ENCODE measurements at regions of chr6 and their contacts with region 1.

Region 1: DNA sequence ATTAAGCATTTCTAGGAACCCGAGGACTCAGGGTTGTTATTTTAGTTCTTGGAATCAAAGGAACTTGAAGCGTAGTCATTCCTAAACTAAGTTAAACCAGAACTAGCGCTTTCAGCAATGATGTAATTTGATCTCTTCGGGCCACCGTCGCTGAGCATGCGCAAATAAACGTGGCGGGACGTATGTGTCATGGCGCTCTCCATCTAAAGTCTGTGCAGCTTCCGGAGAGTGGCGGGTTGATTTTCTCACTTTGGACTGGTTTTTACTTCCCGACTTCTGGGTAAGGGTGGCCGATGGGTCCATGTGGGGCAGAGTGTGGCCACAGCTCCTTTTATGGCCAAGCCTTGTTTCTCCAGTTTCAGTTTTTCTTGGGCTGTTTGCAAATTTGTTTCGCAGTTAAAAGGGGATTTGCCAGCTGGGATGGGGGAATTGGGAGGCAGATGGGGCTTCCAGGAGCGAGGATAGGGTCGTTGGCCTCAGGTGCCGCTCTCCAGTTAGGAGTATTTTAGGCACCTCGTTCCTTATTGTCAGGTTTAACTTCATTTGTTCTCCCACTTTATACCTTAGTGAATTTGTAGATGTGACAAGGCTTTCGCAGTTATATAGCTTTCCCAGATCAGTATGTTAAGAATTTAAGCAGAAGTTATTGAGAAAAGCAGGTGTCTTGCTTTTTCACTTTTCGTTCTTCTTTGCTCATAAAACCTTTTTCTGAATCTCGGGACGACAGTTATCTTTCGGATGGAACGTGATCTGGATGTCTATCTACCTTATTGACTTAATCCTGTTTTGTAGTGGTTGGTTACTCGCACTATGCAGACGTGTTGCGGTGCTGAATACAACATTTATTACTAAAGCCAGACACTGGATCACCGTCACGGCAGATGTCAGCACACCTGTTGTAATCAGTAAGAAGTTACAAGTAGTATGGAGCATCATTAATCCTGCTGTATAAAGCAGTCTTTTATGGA is at the start of gene CDKAL1:
- DNase-seq: peak; percentile 93
- ATAC-seq: peak; percentile 95
- H3K4me3 ChIP-seq: peak within 1 kb of the TSS; percentile 73
- H3K27ac ChIP-seq: peak within 1 kb of the TSS; percentile 92
- H3K4me1 ChIP-seq: 0 out of 2 replicates have a peak, but pooled peaks cover 1% of the 10 kb centered on the region
- H3K27me3 ChIP-seq: no peaks in the 10 kb centered on the region
- CTCF ChIP-seq: no peak
- POLR2A ChIP-seq: peak; percentile 80
- RAD21 ChIP-seq: no peak
- total RNA-seq, gene CDKAL1: 13.1 and 17.5 TPM in 2 replicates

Region 2: DNA sequence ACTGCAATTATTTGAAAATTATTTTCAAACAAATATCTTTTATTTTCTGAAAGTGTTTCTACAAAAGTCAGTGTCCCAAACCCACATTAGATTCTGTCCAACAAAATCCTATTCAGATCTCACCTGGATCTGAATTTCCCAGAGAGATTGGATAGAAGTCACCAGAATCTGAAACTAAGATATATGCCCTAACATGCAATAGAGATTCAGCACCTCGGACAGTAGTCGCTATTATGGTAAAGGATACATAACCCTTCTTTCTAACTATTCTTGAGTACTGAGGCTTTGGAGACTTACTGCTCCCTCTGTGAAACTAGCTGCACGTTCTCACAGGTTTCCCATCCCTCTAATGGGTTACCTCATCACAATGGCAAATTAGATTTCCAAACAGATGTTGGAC is 546.0 kb before region 1 on chr6:
- CTCF ChIA-PET with region 1: no interaction called
- POLR2A ChIA-PET with region 1: no interaction called
- dilution Hi-C with region 1: no loop called
- in situ Hi-C with region 1: no loop called
- intact Hi-C with region 1: no loop called
- DNase-seq: peak; percentile 9
- ATAC-seq: no peak
- H3K4me3 ChIP-seq: no peak overlapping the region
- H3K27ac ChIP-seq: no peak overlapping the region
- H3K4me1 ChIP-seq: no peaks in the 10 kb centered on the region
- H3K27me3 ChIP-seq: no peaks in the 10 kb centered on the region
- CTCF ChIP-seq: no peak
- POLR2A ChIP-seq: no peak
- RAD21 ChIP-seq: no peak

Region 3: GRCh38 chr6:20092071-20092566 is 442.5 kb before region 1 on chr6:
- CTCF ChIA-PET with region 1: no interaction called
- POLR2A ChIA-PET with region 1: no interaction called
- dilution Hi-C with region 1: no loop called
- in situ Hi-C with region 1: loop called (anchors 5 kb)
- intact Hi-C with region 1: loop called (anchors 1 kb)
- DNase-seq: peak; percentile 59
- ATAC-seq: peak; percentile 70
- H3K4me3 ChIP-seq: no peak overlapping the region
- H3K27ac ChIP-seq: no peak overlapping the region
- H3K4me1 ChIP-seq: no peaks in the 10 kb centered on the region
- H3K27me3 ChIP-seq: no peaks in the 10 kb centered on the region
- CTCF ChIP-seq: peak; percentile 69
- POLR2A ChIP-seq: no peak
- RAD21 ChIP-seq: peak; percentile 72